Dendritic cell treated with granulocyte-macrophage colony-stimulating factor and Interleukin-4, amounts not matched to agents 40 ng/mL and 50 ng/mL, for 4 days (primary cell): ENCODE measurements at regions of chr5 and their contacts with region 1.

Region 1: GRCh38 chr5:14399054-14399692 is 182.4 kb upstream of the OTULINL start:
- H3K4me3 Mint-ChIP-seq: no peak overlapping the region
- H3K27ac Mint-ChIP-seq: no peak overlapping the region
- H3K4me1 Mint-ChIP-seq: no peaks in the 10 kb centered on the region
- H3K27me3 Mint-ChIP-seq: no peaks in the 10 kb centered on the region

Region 2: DNA sequence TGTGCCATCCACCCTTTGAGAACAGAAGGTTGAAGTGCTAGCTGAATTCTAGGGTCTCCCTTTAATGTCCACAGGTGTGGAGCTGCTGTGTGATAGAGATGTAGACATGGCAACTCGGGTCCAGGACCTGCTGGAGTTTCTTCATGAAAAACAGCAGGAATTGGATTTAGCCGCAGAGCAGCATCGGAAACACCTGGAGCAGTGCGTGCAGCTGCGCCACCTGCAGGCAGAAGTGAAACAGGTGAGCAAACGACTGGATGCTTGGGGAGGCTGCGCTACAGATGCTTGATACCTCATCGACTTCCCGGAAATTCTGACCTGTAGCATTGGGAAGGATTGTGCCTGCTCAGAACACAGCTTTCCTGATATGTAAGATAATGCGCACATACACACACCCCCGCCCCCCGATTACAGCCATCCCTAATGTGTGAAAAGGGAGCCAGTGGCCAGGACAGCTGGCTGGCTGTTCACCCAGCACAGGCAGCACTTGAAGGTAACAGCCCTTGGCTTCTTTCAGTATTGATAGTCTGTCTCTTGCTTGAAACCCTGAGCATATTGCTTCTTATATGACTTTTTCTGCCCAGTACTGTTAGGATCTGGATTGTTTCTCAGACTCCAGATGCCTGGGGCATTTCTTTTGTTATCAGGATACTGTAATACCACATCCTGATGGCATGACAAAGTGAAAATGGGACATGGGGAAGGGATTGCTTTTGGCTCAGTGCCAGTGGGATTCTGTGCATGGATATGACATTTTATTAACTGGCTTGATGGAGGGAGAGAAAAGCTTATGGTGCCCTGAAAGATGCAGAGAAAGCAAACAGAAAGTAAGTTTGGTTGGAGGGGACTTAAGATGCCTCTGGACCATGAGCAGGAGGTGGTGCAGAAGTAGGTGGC is 34.3 kb before region 1 on chr5:
- intact Hi-C with region 1: loop called (anchors 5 kb)
- H3K4me3 Mint-ChIP-seq: no peak overlapping the region
- H3K27ac Mint-ChIP-seq: no peak overlapping the region
- H3K4me1 Mint-ChIP-seq: peaks cover 27% of the 10 kb centered on the region
- H3K27me3 Mint-ChIP-seq: no peaks in the 10 kb centered on the region

Region 3: GRCh38 chr5:14644623-14645237 is 245.6 kb after region 1 on chr5:
- intact Hi-C with region 1: loop called (anchors 1 kb)
- H3K4me3 Mint-ChIP-seq: no peak overlapping the region
- H3K27ac Mint-ChIP-seq: no peak overlapping the region
- H3K4me1 Mint-ChIP-seq: no peaks in the 10 kb centered on the region
- H3K27me3 Mint-ChIP-seq: no peaks in the 10 kb centered on the region